Ovary (tissue), 10 donors: ENCODE measurements at regions of chr21 and their contacts with region 1.

Region 1: DNA sequence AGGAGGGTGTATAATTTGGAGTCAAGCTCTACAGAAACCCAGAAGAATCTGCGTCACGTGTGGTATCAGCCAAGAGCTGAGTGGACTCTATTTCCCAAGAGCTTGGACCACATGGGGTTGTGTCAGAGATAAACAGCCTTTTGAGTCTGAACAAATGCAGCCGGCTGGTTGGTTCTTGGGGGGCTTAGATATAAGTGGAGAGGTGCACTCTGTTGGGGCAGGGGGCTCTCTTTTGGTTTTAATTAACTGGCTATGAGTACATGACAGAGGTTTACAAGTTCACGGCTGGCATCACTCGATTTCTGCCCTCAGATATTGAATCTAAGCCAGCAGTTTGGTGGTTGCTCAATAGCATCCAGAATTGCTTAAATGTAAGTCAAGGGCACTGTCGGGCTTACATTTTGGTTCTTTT is 501 bp upstream of the MRAP start:
- DNase-seq: peak in 2 of 5 donors; percentile 54 to 66
- H3K4me3 ChIP-seq: no peak overlapping the region
- H3K27ac ChIP-seq: no peak overlapping the region
- H3K4me1 ChIP-seq: peaks cover 2% of the 10 kb centered on the region
- H3K27me3 ChIP-seq: no peaks in the 10 kb centered on the region
- CTCF ChIP-seq: no peak
- EP300 ChIP-seq: no peak
- POLR2A ChIP-seq: no peak

Region 2: GRCh38 chr21:32257962-32258785 is 40.0 kb before region 1 on chr21:
- intact Hi-C with region 1: no loop called
- DNase-seq: peak; percentile 58 to 80 (median 73)
- H3K4me3 ChIP-seq: no peak overlapping the region
- H3K27ac ChIP-seq: no peak overlapping the region
- H3K4me1 ChIP-seq: no peaks in the 10 kb centered on the region
- H3K27me3 ChIP-seq: no peaks in the 10 kb centered on the region
- CTCF ChIP-seq: peak; percentile 28 to 77 (median 68)
- EP300 ChIP-seq: no peak
- POLR2A ChIP-seq: no peak

Region 3: DNA sequence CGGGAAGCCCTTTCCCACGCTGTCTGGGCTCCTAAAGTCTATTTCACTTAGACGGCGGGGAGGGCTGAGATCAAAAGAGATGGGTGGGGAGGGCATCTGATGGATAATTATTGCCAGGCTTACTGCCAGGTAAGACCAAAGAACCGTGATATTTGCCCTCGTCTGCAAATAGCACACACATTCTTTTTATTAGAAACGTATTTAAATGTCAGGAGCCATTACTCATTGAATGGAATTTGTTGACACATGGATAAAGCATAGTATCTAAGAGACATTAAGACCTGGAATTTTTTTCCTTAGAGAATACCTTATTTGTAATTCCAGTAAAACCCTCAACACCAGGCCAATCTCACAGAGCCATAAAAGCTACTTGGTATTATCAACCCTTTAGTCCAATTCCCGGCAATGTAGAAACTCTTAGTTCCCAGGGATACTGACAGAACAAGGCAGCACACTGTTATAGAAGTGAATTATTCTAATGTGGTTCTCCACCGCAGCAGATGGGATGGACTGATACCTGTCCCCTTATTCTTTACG is 84.0 kb after region 1 on chr21:
- intact Hi-C with region 1: loop called in 1 of 4 experiments (anchors 10 kb)
- DNase-seq: no peak
- H3K4me3 ChIP-seq: no peak overlapping the region
- H3K27ac ChIP-seq: peak overlapping the region in 1 of 2 donors; percentile 25
- H3K4me1 ChIP-seq: peaks cover 8% of the 10 kb centered on the region
- H3K27me3 ChIP-seq: no peaks in the 10 kb centered on the region
- CTCF ChIP-seq: no peak
- EP300 ChIP-seq: no peak
- POLR2A ChIP-seq: no peak

Region 4: GRCh38 chr21:32475164-32475812 is 177.1 kb after region 1 on chr21:
- intact Hi-C with region 1: no loop called
- DNase-seq: peak in 2 of 5 donors; percentile 5 to 11
- H3K4me3 ChIP-seq: no peak overlapping the region
- H3K27ac ChIP-seq: peak overlapping the region; percentile 27 to 34
- H3K4me1 ChIP-seq: peaks cover 5% of the 10 kb centered on the region
- H3K27me3 ChIP-seq: no peaks in the 10 kb centered on the region
- CTCF ChIP-seq: peak in 1 of 3 donors; percentile 7
- EP300 ChIP-seq: no peak
- POLR2A ChIP-seq: no peak